Mammary epithelial cell (primary cell): ENCODE measurements at regions of chr1 and their contacts with region 1.

Region 1: GRCh38 chr1:216750012-216750627 is 26.9 kb upstream of the ESRRG start:
- DNase-seq: peak; percentile 45
- H3K4me3 ChIP-seq: no peak overlapping the region
- H3K27ac ChIP-seq: no peak overlapping the region
- H3K4me1 ChIP-seq: no peaks in the 10 kb centered on the region
- H3K27me3 ChIP-seq: no peaks in the 10 kb centered on the region
- CTCF ChIP-seq: peak; percentile 79 to 83

Region 2: DNA sequence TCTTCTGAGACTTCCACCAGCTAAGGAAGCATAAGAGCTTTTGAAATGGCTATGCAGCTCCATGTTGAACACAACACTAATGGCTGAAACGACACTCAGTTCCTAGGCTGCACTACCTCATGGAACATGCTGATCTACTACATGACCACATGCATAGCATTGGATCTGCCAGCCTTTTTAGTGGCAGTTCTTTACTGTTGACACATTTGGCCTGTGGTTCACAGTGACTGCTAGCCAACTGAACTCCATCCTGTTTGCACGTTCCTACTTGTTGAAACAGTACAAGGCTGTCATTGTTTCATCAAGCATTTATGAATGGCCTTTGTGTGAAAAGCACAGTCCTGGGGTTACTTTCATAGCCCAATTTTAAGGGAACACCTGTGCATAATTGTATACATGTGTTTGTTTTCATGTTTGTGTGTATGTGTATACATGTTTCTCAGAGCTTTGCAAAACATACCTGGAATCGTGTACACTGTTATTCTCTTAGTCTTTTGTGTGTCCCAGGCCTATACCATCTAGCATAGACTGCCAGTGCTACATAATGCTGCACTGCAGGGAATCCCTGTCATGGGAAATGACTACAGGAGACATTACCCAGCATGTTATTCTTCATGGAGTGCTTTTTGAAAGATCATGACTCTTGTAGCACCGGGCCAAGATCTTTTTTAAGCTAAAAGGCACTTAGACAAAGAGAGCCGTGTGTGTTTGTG is 152.7 kb after region 1 on chr1:
- CTCF ChIA-PET with region 1: no interaction called
- dilution Hi-C with region 1: no loop called
- in situ Hi-C with region 1: no loop called
- intact Hi-C with region 1: loop called (anchors 2 kb)
- DNase-seq: peak; percentile 98
- H3K4me3 ChIP-seq: peak overlapping the region in 2 of 3 experiments; percentile 7 to 10
- H3K27ac ChIP-seq: peak overlapping the region; percentile 98
- H3K4me1 ChIP-seq: peaks cover 63% of the 10 kb centered on the region
- H3K27me3 ChIP-seq: no peaks in the 10 kb centered on the region
- CTCF ChIP-seq: no peak

Region 3: DNA sequence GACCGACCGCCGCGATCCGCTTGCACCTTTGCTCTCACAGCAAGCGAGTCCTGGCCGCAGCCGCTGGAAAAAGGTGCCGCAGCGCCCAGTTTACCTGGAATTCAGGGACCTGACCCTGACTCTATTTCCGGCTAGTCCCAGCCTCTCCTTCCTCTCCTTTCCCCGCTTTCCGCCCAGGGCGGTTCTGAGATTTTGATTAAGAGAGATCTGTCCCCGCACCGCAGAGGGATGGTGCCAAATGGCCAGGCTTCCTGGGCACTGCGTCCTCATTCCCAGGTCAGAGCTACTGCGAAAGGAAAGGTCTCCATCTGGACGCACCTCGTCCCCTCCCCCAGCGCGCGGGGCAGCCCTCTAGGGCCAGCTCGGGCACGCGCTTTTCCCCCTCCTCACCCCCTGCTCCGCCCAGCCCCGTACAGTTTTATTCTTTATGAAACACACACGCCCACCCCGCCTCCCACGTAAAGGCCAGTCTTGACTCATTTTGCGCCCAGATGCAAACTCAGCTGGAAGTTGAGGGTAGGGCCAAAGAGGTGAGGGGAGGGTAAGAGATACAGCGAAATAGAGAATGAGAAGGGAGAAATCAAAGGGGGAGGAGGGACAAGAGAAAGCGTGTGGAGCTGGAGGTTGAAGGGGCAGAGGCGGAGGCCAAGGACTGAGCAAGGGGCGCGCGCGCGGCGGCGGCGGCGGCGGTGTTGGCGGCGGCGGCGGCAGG is 384.9 kb after region 1 on chr1:
- CTCF ChIA-PET with region 1: interaction called, 4 read pairs
- dilution Hi-C with region 1: no loop called
- in situ Hi-C with region 1: no loop called
- intact Hi-C with region 1: loop called (anchors 10 kb)
- DNase-seq: peak; percentile 38
- H3K4me3 ChIP-seq: peak overlapping the region; percentile 48 to 54 (median 49)
- H3K27ac ChIP-seq: no peak overlapping the region
- H3K4me1 ChIP-seq: peaks cover 6% of the 10 kb centered on the region
- H3K27me3 ChIP-seq: peaks cover 29% of the 10 kb centered on the region
- CTCF ChIP-seq: no peak

Region 4: DNA sequence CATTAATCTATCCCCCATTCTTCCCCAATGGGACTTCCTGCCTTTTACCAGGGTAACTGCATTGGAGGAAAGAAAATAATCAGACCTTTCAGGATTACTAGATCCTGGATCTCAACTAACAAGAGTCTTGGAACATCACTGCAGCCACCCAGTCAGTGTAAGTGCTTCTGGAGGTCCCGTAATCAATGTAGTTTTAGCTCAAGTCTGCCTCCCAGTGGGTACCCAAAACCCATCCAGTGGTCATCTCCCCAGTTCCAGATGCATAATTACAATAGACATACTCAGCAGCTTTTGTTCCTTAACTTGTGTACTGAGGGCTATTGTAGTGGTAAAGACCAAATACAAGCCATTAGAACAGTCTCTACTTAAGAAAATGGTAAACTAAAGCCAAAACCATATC is 561.6 kb after region 1 on chr1:
- CTCF ChIA-PET with region 1: no interaction called
- dilution Hi-C with region 1: no loop called
- in situ Hi-C with region 1: no loop called
- intact Hi-C with region 1: loop called (anchors 1 kb)
- DNase-seq: no peak
- H3K4me3 ChIP-seq: no peak overlapping the region
- H3K27ac ChIP-seq: no peak overlapping the region
- H3K4me1 ChIP-seq: no peaks in the 10 kb centered on the region
- H3K27me3 ChIP-seq: no peaks in the 10 kb centered on the region
- CTCF ChIP-seq: peak in 1 of 2 donors; percentile 6

Region 5: GRCh38 chr1:217393896-217394295 is 643.8 kb after region 1 on chr1:
- CTCF ChIA-PET with region 1: no interaction called
- dilution Hi-C with region 1: no loop called
- in situ Hi-C with region 1: no loop called
- intact Hi-C with region 1: loop called (anchors 1 kb)
- DNase-seq: no peak
- H3K4me3 ChIP-seq: no peak overlapping the region
- H3K27ac ChIP-seq: no peak overlapping the region
- H3K4me1 ChIP-seq: no peaks in the 10 kb centered on the region
- H3K27me3 ChIP-seq: no peaks in the 10 kb centered on the region
- CTCF ChIP-seq: peak in 1 of 2 donors; percentile 40

Region 6: GRCh38 chr1:217747156-217747769 is 997.1 kb after region 1 on chr1:
- CTCF ChIA-PET with region 1: no interaction called
- dilution Hi-C with region 1: no loop called
- in situ Hi-C with region 1: no loop called
- intact Hi-C with region 1: loop called (anchors 10 kb)
- DNase-seq: peak; percentile 14
- H3K4me3 ChIP-seq: no peak overlapping the region
- H3K27ac ChIP-seq: no peak overlapping the region
- H3K4me1 ChIP-seq: no peaks in the 10 kb centered on the region
- H3K27me3 ChIP-seq: no peaks in the 10 kb centered on the region
- CTCF ChIP-seq: peak; percentile 72 to 75